Psoas muscle (tissue), 8 donors: ENCODE measurements at regions of chr3 and their contacts with region 1.

Region 1: DNA sequence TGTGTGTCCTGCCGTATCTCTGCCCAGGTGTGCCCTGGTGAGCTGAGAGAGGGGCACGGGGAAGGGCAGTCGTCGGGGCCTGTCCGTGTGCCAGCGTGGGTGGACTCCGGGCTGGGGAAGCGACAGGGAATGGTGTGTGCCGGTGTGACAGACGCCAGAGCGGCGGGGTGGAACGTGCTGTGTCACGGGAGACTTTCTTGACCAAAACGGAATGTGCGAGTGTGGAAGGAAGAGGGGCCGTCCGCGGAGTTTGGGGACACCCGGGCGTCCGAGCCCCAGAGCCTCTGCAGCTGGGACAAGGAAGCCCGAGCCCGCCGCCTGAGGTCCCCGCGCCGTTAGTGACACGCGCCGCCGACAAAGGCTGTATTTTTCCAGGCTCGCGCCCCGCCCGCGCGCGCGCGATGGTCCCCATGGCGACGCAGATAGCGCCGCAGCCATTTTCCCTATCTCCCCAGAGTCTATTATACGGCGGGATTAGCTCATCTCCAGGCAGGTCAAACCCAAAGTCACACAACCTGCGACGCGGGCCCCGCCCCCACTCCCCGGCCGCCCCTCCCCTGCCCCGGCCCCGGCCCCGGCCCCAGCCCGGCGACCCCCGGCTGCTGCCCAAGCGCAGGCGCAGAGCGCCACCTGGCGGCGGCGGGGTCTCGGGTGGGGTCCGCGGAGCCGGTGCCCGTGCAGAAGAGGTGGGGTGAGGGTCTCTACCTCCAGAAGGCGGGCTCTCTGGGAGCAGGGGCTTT is 4.6 kb upstream of the GATA2 start:
- DNase-seq: peak; percentile 61 to 74
- ATAC-seq: peak; percentile 48 to 80 (median 56)
- H3K4me3 ChIP-seq: peak overlapping the region; percentile 67
- H3K27ac ChIP-seq: no peak overlapping the region
- H3K4me1 ChIP-seq: peaks cover 21% of the 10 kb centered on the region
- H3K27me3 ChIP-seq: peaks cover 0 to 78% (median 20%) of the 10 kb centered on the region in 3 donors
- CTCF ChIP-seq: peak; percentile 90

Region 2: GRCh38 chr3:128095222-128095703 is 402.3 kb before region 1 on chr3:
- intact Hi-C with region 1: loop called (anchors 5 kb)
- DNase-seq: peak; percentile 76 to 88
- ATAC-seq: peak; percentile 96 to 100 (median 98)
- H3K4me3 ChIP-seq: no peak overlapping the region
- H3K27ac ChIP-seq: peak overlapping the region; percentile 30
- H3K4me1 ChIP-seq: peaks cover 4% of the 10 kb centered on the region
- H3K27me3 ChIP-seq: no peaks in the 10 kb centered on the region
- CTCF ChIP-seq: peak; percentile 88

Region 3: GRCh38 chr3:128170805-128171516 is 326.6 kb before region 1 on chr3:
- intact Hi-C with region 1: loop called (anchors 5 kb)
- DNase-seq: peak; percentile 44 to 68
- ATAC-seq: peak; percentile 70 to 91 (median 78)
- H3K4me3 ChIP-seq: no peak overlapping the region
- H3K27ac ChIP-seq: no peak overlapping the region
- H3K4me1 ChIP-seq: peaks cover 23% of the 10 kb centered on the region
- H3K27me3 ChIP-seq: no peaks in the 10 kb centered on the region
- CTCF ChIP-seq: peak; percentile 54

Region 4: GRCh38 chr3:128226795-128227395 is 270.7 kb before region 1 on chr3:
- intact Hi-C with region 1: loop called in 1 of 2 experiments (anchors 2 kb)
- DNase-seq: peak; percentile 28 to 61
- ATAC-seq: peak; percentile 61 to 84 (median 80)
- H3K4me3 ChIP-seq: no peak overlapping the region
- H3K27ac ChIP-seq: no peak overlapping the region
- H3K4me1 ChIP-seq: no peaks in the 10 kb centered on the region
- H3K27me3 ChIP-seq: no peaks in the 10 kb centered on the region
- CTCF ChIP-seq: peak; percentile 63

Region 5: DNA sequence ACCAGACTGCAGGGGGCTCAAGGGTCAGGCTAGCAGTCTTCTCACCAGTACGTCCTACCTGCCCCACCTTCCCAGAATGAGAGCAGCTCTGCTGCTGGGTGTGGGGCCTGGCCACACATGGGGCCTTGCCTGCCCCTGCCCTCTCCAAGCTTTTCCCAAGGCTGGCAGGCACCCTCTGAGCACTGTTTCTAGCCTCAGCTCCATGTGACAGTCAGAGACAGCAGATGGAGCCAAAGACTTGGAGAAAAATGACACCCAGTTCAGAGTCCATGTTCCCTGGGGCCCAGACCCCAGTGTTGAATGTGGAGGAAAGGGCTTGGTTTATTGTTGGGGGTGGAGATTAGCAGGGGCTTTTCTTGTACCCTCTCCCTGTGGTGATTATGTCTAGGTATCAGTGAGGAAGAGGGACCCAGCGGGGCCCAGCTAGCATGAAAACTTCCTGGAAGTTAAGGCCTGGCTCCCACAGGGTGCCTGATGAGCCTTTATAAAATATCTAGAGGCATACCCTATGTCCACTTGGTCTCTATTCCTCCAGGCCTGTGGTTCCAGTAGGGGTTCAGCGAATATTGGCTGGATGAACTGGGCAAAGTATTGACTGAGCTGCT is 190.4 kb before region 1 on chr3:
- intact Hi-C with region 1: loop called in 1 of 2 experiments (anchors 5 kb)
- DNase-seq: no peak
- ATAC-seq: peak in 3 of 4 donors; percentile 30 to 42 (median 40)
- H3K4me3 ChIP-seq: no peak overlapping the region
- H3K27ac ChIP-seq: no peak overlapping the region
- H3K4me1 ChIP-seq: peaks cover 3% of the 10 kb centered on the region
- H3K27me3 ChIP-seq: no peaks in the 10 kb centered on the region
- CTCF ChIP-seq: peak; percentile 5

Region 6: DNA sequence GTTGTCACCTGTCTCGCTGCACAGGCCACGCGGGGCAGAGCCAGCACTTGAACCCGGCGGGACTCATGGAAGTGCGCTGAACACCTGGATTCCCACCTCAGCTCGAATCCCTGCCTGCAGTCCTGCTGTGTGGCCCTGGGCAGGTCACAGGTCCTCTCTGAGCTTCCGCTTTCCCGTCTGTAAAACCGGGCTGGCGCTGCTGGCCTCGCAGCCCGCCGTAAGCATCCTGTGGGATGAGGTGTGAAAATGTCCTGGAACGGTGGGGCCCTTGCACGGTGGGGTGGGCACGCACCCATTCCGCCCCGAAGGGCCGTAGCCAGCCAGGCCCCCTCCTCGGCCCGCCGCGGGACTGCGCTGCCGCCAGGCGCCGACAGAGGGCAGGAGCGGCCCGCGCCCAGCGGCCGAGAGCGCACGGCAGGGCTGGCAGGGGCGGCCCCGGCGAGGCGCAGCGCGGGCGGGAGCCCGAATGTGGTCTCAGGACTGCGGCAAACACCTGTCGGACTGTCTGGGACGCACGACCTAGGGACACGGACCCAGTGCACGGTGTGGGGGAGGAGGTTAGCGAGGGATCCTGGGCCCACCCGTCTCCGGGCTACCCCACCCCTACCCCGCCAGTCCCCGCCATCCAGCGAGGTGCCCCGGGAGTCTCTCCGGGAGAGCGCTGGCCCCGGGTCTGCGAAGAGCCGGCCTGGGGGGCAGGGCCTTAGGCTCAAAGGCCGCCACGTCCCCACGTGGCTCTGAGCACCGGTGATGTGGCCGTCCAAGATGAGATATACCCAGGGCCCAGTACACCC is 71.2 kb before region 1 on chr3:
- intact Hi-C with region 1: loop called (anchors 2 to 5 kb)
- DNase-seq: peak in 1 of 2 donors; percentile 68
- ATAC-seq: peak; percentile 92 to 97 (median 94)
- H3K4me3 ChIP-seq: peak overlapping the region; percentile 40
- H3K27ac ChIP-seq: no peak overlapping the region
- H3K4me1 ChIP-seq: peaks cover 3% of the 10 kb centered on the region
- H3K27me3 ChIP-seq: peaks cover 0 to 6% (median 0%) of the 10 kb centered on the region in 3 donors
- CTCF ChIP-seq: peak; percentile 96